ENCODE measurements at regions of chr7 and their contacts with region 1.

Region 1: GRCh38 chr7:24290004-24290641 is 6.1 kb downstream of the NPY start:
- DNase-seq: no peak
- H3K4me3 ChIP-seq: no peak overlapping the region
- H3K27ac ChIP-seq: no peak overlapping the region
- H3K4me1 ChIP-seq: no peaks in the 10 kb centered on the region
- H3K27me3 ChIP-seq: peaks cover 0 to 24% of the 10 kb centered on the region in 2 donors
- CTCF ChIP-seq: no peak
- POLR2A ChIP-seq: no peak

Region 2: DNA sequence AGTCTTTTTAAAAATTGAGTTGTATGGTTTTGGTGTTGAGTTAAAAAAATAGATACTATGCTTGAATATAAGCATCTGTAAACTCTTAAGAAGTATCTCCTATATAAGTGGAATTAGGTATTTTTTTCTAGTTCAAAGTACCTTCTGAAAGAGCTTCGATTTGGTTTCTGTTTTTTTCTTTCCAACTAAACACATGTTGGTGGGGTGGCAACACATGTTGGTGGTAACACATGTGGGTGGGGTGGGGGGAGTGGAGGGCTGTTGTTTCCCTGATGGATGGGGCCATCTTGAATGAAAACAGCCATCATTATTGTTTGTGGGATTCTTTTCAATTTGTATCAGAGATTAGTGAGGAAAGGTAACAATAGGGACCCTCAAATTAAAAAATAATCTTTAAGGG is 401.2 kb before region 1 on chr7:
- intact Hi-C with region 1: loop called (anchors 5 kb)
- DNase-seq: no peak
- H3K4me3 ChIP-seq: no peak overlapping the region
- H3K27ac ChIP-seq: no peak overlapping the region
- H3K4me1 ChIP-seq: no peaks in the 10 kb centered on the region
- H3K27me3 ChIP-seq: no peaks in the 10 kb centered on the region
- CTCF ChIP-seq: no peak
- POLR2A ChIP-seq: no peak

Region 3: GRCh38 chr7:24325708-24326107 is 35.6 kb after region 1 on chr7:
- intact Hi-C with region 1: no loop called
- DNase-seq: no peak
- H3K4me3 ChIP-seq: no peak overlapping the region
- H3K27ac ChIP-seq: no peak overlapping the region
- H3K4me1 ChIP-seq: no peaks in the 10 kb centered on the region
- H3K27me3 ChIP-seq: no peaks in the 10 kb centered on the region
- CTCF ChIP-seq: no peak
- POLR2A ChIP-seq: no peak

Region 4: DNA sequence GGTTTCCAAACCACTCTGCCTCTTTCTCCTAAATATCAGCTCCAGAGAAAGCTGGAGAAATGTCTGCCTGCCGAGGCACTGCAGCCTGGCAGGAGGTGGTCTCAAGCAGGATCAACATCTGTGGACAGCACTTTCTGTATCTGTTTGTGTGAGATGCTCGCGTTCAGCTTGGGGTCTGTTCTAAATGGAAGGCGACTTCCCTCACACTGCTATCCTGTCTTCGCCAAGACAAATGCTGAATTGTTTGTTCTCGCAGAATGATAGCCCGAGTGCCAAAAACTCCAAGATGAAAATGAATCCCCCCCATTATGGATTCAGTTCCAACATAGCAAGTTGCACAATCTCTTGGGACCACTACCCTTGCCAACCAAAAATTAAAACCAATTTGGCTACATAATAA is 210.9 kb after region 1 on chr7:
- intact Hi-C with region 1: no loop called
- DNase-seq: no peak
- H3K4me3 ChIP-seq: peak overlapping the region in 1 of 3 donors; percentile 3
- H3K27ac ChIP-seq: no peak overlapping the region
- H3K4me1 ChIP-seq: no peaks in the 10 kb centered on the region
- H3K27me3 ChIP-seq: no peaks in the 10 kb centered on the region
- CTCF ChIP-seq: no peak
- POLR2A ChIP-seq: no peak

Measured in breast epithelium (tissue), 4 donors.